ENCODE measurements at regions of chr14 and their contacts with region 1.

Region 1: DNA sequence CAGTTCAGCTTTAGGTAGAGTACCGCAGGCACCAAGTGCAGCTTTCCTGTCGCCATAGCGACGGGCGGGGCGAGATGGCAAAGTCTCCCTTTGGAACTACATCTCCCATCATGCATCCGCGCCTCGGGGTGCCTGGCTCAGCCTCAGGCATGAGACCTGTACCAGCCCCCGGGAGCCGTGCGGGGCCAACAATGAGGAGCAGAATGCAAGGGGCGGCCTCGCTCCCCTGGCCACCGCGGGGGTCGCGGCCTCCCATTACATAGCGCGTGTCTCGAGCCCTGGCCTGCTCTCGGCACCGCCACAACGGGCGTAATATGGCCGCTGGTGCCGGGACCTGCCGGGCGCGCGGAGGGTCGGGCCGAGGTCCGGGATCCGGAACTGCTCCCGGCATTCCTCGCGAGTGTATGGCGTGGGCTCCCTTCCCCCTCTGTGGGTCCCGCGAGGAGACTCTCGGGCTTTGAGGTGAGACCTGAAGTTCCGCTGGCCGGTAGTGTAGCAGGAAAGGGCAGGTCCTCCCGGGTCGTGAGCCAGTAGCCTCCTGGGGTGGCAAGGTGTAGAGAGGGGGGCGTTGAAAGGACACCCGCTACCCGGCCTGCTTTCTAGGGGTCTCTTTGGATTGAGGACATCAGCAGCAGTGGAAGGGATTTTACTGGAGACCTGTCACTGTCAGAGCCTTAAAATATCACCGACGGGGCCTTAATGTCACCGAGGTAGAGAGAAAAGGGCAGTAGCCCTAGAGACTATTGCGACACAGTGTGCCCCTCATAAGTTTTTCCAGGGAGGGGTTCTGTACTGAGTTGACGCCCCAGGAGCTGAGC is at the start of gene THTPA:
- DNase-seq: peak; percentile 97
- H3K4me3 Mint-ChIP-seq: peak within 1 kb of the TSS; percentile 95
- H3K27ac Mint-ChIP-seq: peak within 1 kb of the TSS; percentile 91
- H3K4me1 Mint-ChIP-seq: peaks cover 51% of the 10 kb centered on the region
- H3K27me3 Mint-ChIP-seq: no peaks in the 10 kb centered on the region

Region 2: DNA sequence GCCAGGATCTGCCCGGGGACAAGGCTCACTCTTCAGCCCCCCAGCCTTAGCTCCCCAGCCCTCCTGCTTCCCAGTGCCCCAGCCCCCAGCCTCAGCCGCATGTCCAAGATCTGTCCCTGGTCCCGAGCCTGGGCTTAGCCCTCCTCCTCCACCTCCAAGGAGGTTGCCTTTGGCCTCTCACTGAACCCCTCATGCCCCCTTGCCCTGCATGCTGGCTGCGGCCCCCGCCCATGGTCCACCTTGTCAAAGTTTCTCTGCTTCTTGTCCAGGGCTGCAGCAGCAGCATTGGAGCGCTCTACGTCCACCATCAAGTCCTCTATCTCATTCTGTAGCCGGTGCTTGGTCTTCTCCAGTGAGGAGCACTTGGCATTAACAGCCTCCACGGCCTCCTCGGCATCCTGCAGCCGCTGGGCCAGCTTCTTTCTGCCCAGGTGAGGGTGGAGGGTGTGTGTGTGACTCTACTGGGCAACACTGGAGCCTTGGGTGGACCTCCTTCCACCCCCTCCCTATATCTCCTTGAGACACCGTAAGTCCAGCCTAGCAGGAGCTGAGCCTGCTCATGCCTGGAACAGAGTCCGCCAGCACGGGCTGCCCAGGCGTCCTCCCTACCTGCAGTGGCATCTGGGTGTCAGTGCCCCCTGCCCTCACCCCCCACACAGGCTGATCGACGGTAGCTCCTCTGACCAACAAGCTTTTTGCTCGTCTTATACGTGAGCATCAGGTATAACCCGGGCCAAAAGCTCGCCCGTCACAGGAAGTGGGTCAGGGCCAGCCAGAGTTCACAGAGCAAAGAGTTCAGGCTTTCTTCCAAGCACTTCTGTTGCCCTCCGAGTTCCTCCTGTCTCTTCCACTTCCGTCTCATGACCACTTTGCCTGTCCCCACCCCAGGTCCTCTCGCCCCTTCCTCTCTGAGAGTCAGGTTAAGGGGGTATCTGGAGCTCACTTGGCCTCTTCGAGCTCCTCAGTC is 167.9 kb before region 1 on chr14:
- CTCF ChIA-PET with region 1: no interaction called
- DNase-seq: no peak
- H3K4me3 Mint-ChIP-seq: no peak overlapping the region
- H3K27ac Mint-ChIP-seq: no peak overlapping the region
- H3K4me1 Mint-ChIP-seq: no peaks in the 10 kb centered on the region
- H3K27me3 Mint-ChIP-seq: peaks cover 20% of the 10 kb centered on the region

Region 3: GRCh38 chr14:23478111-23478759 is 77.9 kb before region 1 on chr14:
- CTCF ChIA-PET with region 1: interaction called, 238 read pairs
- DNase-seq: peak; percentile 79
- H3K4me3 Mint-ChIP-seq: no peak overlapping the region
- H3K27ac Mint-ChIP-seq: no peak overlapping the region
- H3K4me1 Mint-ChIP-seq: peaks cover 2% of the 10 kb centered on the region
- H3K27me3 Mint-ChIP-seq: no peaks in the 10 kb centered on the region

Region 4: DNA sequence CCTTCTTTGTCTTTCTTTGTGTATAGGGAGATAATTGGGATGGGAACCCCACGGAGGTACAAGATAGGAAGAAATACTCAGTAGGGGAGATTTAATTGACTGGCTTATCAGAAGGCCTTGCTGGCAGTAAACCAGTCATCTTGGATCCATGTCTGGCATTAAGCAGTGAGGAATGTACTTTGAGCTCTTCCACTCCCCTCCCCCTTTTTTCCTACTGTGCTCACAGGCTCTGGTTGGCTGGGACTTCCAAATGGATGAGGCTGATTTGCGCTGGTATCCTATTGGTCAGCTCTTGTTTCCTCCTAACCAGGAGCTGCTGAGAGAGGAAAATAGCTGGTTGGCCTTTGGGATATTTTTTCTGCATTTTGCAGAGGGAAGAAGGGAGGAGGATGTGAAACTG is 61.9 kb before region 1 on chr14:
- CTCF ChIA-PET with region 1: interaction called, 10 read pairs
- DNase-seq: no peak
- H3K4me3 Mint-ChIP-seq: no peak overlapping the region
- H3K27ac Mint-ChIP-seq: no peak overlapping the region
- H3K4me1 Mint-ChIP-seq: no peaks in the 10 kb centered on the region
- H3K27me3 Mint-ChIP-seq: no peaks in the 10 kb centered on the region

Region 5: GRCh38 chr14:23539248-23540140 is 16.6 kb before region 1 on chr14:
- CTCF ChIA-PET with region 1: interaction called, 51 read pairs
- DNase-seq: peak; percentile 38
- H3K4me3 Mint-ChIP-seq: no peak overlapping the region
- H3K27ac Mint-ChIP-seq: no peak overlapping the region
- H3K4me1 Mint-ChIP-seq: no peaks in the 10 kb centered on the region
- H3K27me3 Mint-ChIP-seq: peaks cover 24% of the 10 kb centered on the region

Region 6: DNA sequence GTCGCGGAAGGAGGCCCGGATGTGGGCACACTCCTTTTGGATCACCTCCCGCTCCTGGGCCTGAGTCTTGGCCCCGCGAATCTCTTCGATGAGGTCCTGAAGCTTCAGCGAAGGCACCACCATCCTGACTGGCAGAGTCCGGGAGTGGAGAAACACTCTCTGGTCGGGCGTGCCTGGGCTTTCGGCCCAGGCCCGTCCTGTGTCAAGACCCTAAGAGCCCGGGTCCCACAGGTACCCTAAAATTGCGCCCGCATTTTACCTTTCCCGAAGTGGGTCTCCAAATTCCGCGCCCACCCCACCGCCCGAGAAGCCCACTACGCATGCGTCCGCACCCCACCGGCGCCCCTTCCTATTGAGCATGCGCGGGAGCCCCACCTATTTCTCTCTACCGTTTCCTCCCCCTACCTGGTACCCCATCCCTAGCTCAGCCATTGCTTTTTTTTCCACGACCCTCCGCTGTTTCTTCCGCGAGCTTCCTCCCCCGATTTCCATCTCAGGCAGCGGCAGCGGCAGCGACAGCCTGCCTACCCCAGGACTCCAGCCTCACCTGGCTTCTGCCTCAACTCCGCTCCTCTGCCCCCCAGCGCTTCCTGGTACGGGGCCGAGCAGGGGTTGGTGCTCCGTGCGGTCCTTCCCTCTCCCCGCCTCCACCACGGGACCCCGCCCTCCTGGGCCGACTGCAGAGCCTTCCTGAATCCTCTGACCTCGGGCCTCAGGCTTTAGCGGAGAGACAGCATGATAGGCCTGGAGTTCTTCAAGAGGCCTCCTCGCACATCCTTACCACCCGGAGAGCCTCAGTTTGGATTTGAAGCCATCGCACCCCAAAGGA is 11.3 kb after region 1 on chr14 and contains the start of gene AP1G2:
- CTCF ChIA-PET with region 1: interaction called, 38 read pairs
- DNase-seq: peak; percentile 94
- H3K4me3 Mint-ChIP-seq: peak within 1 kb of the TSS; percentile 100
- H3K27ac Mint-ChIP-seq: peak within 1 kb of the TSS; percentile 97
- H3K4me1 Mint-ChIP-seq: peaks cover 55% of the 10 kb centered on the region
- H3K27me3 Mint-ChIP-seq: peaks cover 18% of the 10 kb centered on the region

Region 7: DNA sequence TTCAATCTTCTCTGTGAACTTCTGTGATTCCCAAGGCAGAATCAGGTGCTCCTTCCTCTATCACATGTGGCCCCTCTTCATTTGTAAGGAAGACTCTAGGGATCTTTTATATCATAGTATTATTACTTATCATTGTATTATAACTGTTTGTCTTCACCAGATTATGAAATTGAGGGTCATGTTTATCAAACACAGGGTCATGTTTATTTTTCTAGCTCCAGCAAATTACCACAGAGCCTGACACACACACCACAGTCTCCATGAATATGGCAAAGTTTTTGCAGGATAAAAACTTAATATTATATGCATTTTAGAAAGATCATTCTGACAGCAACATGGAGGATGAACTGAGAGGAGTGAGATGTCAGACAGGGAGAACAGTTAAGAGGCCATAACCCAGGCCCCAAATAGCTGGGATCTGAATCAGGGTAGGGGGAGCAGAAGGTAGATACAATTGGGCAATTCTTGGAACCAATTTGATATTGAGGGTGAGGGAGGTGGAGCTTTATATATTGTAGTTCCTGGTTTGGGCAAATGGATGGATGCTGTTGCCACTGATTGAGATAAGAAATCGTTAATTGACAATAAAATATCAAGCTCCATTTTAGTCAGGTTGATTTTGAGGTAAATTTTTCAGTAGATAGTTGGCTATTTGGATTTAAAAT is 210.8 kb after region 1 on chr14:
- CTCF ChIA-PET with region 1: no interaction called
- DNase-seq: no peak
- H3K4me3 Mint-ChIP-seq: no peak overlapping the region
- H3K27ac Mint-ChIP-seq: no peak overlapping the region
- H3K4me1 Mint-ChIP-seq: no peaks in the 10 kb centered on the region
- H3K27me3 Mint-ChIP-seq: peaks cover 6% of the 10 kb centered on the region